Naive thymus-derived CD8-positive, alpha-beta T cell (primary cell): ENCODE measurements at regions of chr20 and their contacts with region 1.

Region 1: GRCh38 chr20:59191756-59192532 is 28.3 kb downstream of the ZNF831 start:
- DNase-seq: no peak
- ATAC-seq: no peak
- H3K4me3 Mint-ChIP-seq: no peak overlapping the region
- H3K27ac Mint-ChIP-seq: peak overlapping the region in 2 of 10 donors; percentile 52 to 79
- H3K4me1 Mint-ChIP-seq: peaks cover 13 to 27% (median 20%) of the 10 kb centered on the region in 4 donors
- H3K27me3 Mint-ChIP-seq: no peaks in the 10 kb centered on the region

Region 2: GRCh38 chr20:59115325-59115724 is 76.6 kb before region 1 on chr20:
- POLR2A ChIA-PET with region 1: no interaction called
- DNase-seq: no peak
- ATAC-seq: no peak
- H3K4me3 Mint-ChIP-seq: no peak overlapping the region
- H3K27ac Mint-ChIP-seq: peak overlapping the region in 1 of 10 donors; percentile 50
- H3K4me1 Mint-ChIP-seq: peaks cover 28 to 49% (median 41%) of the 10 kb centered on the region in 4 donors
- H3K27me3 Mint-ChIP-seq: no peaks in the 10 kb centered on the region

Region 3: GRCh38 chr20:59149651-59150504 is 42.1 kb before region 1 on chr20:
- POLR2A ChIA-PET with region 1: interaction called, 12 read pairs
- DNase-seq: peak; percentile 55 to 95 (median 86)
- ATAC-seq: peak; percentile 71 to 85
- H3K4me3 Mint-ChIP-seq: peak overlapping the region; percentile 62 to 86 (median 75)
- H3K27ac Mint-ChIP-seq: peak overlapping the region; percentile 96 to 100 (median 99)
- H3K4me1 Mint-ChIP-seq: peaks cover 54 to 97% (median 97%) of the 10 kb centered on the region in 4 donors
- H3K27me3 Mint-ChIP-seq: no peaks in the 10 kb centered on the region

Region 4: GRCh38 chr20:59207742-59208357 is 15.9 kb after region 1 on chr20:
- POLR2A ChIA-PET with region 1: no interaction called
- DNase-seq: peak; percentile 63 to 92 (median 78)
- ATAC-seq: peak; percentile 96 to 98
- H3K4me3 Mint-ChIP-seq: no peak overlapping the region
- H3K27ac Mint-ChIP-seq: peak overlapping the region; percentile 17 to 96 (median 84)
- H3K4me1 Mint-ChIP-seq: peaks cover 17 to 50% (median 36%) of the 10 kb centered on the region in 4 donors
- H3K27me3 Mint-ChIP-seq: no peaks in the 10 kb centered on the region